Activated B cell treated with CpG ODN at 0.5 μM for 24 hours (primary cell): ENCODE measurements at regions of chrX and their contacts with region 1.

Region 1: GRCh38 chrX:39261446-39262147 is 460.3 kb downstream of the MID1IP1 start:
- DNase-seq: no peak
- ATAC-seq: no peak
- H3K4me3 Mint-ChIP-seq: no peak overlapping the region
- H3K27ac Mint-ChIP-seq: no peak overlapping the region
- H3K4me1 Mint-ChIP-seq: peaks cover 4% of the 10 kb centered on the region
- H3K27me3 Mint-ChIP-seq: no peaks in the 10 kb centered on the region
- CTCF ChIP-seq: no peak

Region 2: DNA sequence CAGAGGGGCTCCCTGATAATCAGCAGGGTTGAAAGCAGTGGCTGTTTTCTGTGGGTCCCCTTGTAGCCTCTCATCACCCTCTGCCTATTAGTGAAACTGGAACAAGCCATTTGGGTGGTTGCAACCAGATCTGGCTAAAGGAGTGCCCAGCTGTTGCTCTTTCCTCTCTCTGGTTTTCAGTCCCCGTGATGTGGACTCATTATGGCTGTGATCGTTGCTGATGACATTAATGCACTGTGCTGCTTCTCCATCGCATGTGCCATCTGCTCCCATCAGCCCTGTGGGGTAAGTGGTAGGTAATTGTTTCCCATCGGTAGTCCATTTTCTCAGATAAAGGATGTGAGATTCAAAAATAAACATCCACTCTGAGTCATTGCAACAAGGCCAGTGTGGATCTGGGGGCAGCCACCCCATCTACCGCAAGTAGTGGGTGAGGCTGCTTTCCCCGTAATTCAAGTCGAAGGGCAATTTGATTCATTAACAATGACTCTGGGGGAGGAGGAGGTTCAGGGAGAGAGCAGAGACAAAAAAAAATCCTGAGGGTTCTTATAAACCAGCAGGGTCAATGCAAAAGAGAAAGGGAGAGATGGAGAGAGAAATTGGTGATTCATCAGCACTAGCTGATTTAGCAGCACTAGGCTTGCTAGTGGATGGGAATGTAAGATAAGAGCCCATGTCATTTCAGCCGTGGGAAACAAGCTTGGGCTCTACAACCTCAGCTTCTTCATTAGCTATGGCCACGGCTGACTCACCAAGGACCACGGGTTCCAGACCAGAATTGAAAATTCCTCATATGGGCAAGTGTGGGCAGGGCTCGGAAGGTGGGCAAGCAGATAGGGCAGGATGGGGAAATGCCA is 102.6 kb before region 1 on chrX:
- CTCF ChIA-PET with region 1: no interaction called
- POLR2A ChIA-PET with region 1: no interaction called
- intact Hi-C with region 1: no loop called
- DNase-seq: no peak
- ATAC-seq: peak; percentile 45
- H3K4me3 Mint-ChIP-seq: no peak overlapping the region
- H3K27ac Mint-ChIP-seq: no peak overlapping the region
- H3K4me1 Mint-ChIP-seq: peaks cover 23% of the 10 kb centered on the region
- H3K27me3 Mint-ChIP-seq: peaks cover 4% of the 10 kb centered on the region
- CTCF ChIP-seq: no peak

Region 3: DNA sequence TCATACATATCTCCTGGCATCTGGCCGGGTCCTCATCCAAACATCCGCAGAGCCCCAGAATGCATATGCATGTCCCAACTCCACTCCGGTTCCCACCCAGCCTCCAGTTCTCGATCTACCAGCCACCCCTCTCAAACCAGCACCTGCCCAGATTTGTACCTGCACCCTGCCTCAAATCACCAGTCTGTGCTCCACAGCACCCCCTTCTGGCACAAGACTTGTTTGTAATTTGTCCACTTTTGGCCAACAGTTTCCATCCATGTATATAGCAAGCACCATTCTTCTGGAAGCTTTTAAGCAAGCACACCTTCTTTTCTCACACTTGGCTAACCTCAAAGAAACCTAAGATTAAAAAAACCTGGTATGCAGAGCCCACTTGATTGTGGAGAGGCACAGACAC is 183.7 kb after region 1 on chrX:
- CTCF ChIA-PET with region 1: interaction called, 3 read pairs
- POLR2A ChIA-PET with region 1: no interaction called
- intact Hi-C with region 1: loop called (anchors 1 kb)
- DNase-seq: no peak
- ATAC-seq: no peak
- H3K4me3 Mint-ChIP-seq: no peak overlapping the region
- H3K27ac Mint-ChIP-seq: no peak overlapping the region
- H3K4me1 Mint-ChIP-seq: peaks cover 31% of the 10 kb centered on the region
- H3K27me3 Mint-ChIP-seq: no peaks in the 10 kb centered on the region
- CTCF ChIP-seq: no peak

Region 4: GRCh38 chrX:39613482-39613921 is 351.9 kb after region 1 on chrX:
- CTCF ChIA-PET with region 1: no interaction called
- POLR2A ChIA-PET with region 1: no interaction called
- intact Hi-C with region 1: loop called (anchors 5 kb)
- DNase-seq: peak; percentile 14
- ATAC-seq: peak; percentile 23
- H3K4me3 Mint-ChIP-seq: peak overlapping the region; percentile 67
- H3K27ac Mint-ChIP-seq: no peak overlapping the region
- H3K4me1 Mint-ChIP-seq: peaks cover 27% of the 10 kb centered on the region
- H3K27me3 Mint-ChIP-seq: peaks cover 22% of the 10 kb centered on the region
- CTCF ChIP-seq: no peak

Region 5: DNA sequence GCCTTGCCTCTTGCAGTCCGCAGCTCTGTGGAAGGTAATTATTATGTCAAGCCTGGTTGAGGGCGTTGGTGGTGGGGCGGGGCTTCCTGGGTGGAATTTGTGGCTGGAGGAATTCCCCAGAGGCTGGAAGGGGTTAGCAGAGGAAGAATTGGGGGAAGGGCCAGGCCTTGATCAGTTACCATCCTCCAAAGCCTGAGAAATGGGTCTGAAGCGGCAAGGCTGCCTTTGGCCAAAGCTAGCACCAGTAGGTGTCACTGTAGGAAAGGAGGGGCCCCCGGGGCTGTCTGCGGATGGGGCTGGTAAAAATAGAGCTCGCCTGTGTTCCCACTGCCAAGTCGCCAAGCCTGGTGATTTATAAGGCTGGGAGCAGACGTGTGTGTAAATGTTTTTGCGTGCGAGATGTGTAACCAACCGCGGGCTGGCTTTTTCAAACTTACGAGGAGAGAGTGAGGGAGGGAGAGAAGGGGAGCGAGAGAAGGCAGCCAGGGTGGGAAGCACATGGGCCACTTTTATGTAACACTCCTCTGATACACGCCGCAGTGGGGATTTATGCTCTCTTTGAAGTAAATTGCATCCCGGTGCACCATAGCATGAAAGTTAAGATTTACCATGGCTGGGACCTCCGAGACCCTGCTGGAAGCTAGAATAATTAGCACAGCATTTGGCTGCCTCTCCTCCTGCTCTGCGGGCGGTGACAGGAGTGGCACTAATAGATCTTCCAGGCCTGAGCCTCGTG is 469.2 kb after region 1 on chrX:
- CTCF ChIA-PET with region 1: no interaction called
- POLR2A ChIA-PET with region 1: no interaction called
- intact Hi-C with region 1: loop called (anchors 10 kb)
- DNase-seq: no peak
- ATAC-seq: peak; percentile 64
- H3K4me3 Mint-ChIP-seq: peak overlapping the region; percentile 53
- H3K27ac Mint-ChIP-seq: no peak overlapping the region
- H3K4me1 Mint-ChIP-seq: peaks cover 5% of the 10 kb centered on the region
- H3K27me3 Mint-ChIP-seq: peaks cover 8% of the 10 kb centered on the region
- CTCF ChIP-seq: no peak